Psoas muscle (tissue), 8 donors: ENCODE measurements at regions of chr11 and their contacts with region 1.

Region 1: GRCh38 chr11:63573881-63574855 is 11.0 kb upstream of the PLAAT2 start:
- DNase-seq: peak; percentile 22 to 59
- ATAC-seq: peak; percentile 71 to 84 (median 80)
- H3K4me3 ChIP-seq: peak overlapping the region; percentile 48
- H3K27ac ChIP-seq: peak overlapping the region; percentile 74
- H3K4me1 ChIP-seq: peaks cover 17% of the 10 kb centered on the region
- H3K27me3 ChIP-seq: no peaks in the 10 kb centered on the region
- CTCF ChIP-seq: no peak

Region 2: DNA sequence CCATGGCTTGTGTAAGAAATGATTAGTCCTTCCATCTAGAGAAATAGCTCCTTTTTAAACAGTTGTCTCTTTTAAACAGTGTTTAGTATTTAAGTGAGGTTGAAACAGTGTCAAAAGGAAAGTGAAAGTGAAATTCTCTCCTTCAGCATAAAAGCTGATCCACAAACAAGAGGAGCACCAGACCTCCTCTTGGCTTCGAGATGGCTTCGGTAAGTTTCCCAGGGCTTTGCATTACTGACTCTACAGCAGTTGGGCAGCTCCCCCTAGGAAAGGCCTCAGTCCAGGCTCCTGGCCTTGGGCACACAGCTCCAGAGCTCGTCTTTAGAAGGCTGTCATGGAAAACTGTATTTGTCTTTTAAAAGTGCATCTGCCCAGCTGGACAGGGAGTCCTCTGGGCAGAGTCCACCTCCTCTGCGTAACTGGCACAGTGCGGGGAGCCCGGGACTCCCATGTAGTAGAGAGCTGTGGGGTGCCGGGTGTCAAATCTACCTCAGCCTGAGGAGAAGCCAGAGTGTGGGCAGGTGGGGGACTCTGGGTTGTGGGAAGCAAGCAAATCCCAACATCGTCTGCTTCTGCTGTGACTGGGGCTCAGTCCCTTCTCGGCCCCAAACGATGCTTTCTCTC is 37.4 kb before region 1 on chr11 and contains the start of gene PLAAT4:
- intact Hi-C with region 1: loop called in 1 of 2 experiments (anchors 2 kb)
- DNase-seq: peak in 1 of 2 donors; percentile 23
- ATAC-seq: peak; percentile 52 to 68 (median 61)
- H3K4me3 ChIP-seq: peak within 1 kb of the TSS; percentile 66
- H3K27ac ChIP-seq: peak within 1 kb of the TSS; percentile 79
- H3K4me1 ChIP-seq: peaks cover 19% of the 10 kb centered on the region
- H3K27me3 ChIP-seq: no peaks in the 10 kb centered on the region
- CTCF ChIP-seq: no peak
- total RNA-seq, gene PLAAT4: 6.9 to 12.2 (median 8.1) TPM

Region 3: DNA sequence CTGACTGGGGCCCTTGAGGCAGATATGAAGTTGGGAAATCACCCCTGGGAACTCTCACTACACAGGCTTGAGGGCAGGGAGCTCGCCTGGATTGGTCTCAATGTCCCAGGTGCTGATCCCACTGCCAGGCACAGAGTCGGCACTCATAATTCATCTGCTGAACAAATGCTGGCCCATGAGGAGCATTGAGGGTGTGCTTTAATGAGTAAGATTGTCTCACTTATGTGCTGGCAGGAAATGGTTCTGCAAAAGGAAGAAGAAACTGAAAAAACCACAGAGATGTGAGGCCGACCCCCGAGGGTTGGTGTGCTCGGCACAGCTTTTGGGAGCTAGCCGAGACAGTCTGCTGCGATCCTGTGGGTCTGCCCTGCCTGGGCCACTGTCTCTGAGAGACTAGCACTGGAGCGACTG is 20.4 kb before region 1 on chr11:
- intact Hi-C with region 1: no loop called
- DNase-seq: peak in 1 of 2 donors; percentile 49
- ATAC-seq: peak in 2 of 4 donors; percentile 42 to 51
- H3K4me3 ChIP-seq: no peak overlapping the region
- H3K27ac ChIP-seq: no peak overlapping the region
- H3K4me1 ChIP-seq: no peaks in the 10 kb centered on the region
- H3K27me3 ChIP-seq: no peaks in the 10 kb centered on the region
- CTCF ChIP-seq: no peak